MCF 10A (cell line): ENCODE measurements at regions of chr2 and their contacts with region 1.

Region 1: GRCh38 chr2:30072250-30072842 is 74.5 kb upstream of the YPEL5 start:
- DNase-seq: peak; percentile 85
- H3K4me3 Mint-ChIP-seq: no peak overlapping the region
- H3K27ac Mint-ChIP-seq: no peak overlapping the region
- H3K4me1 Mint-ChIP-seq: no peaks in the 10 kb centered on the region
- H3K27me3 Mint-ChIP-seq: peaks cover 65% of the 10 kb centered on the region
- CTCF ChIP-seq: peak; percentile 74

Region 2: GRCh38 chr2:29238497-29238896 is 833.8 kb before region 1 on chr2:
- CTCF ChIA-PET with region 1: no interaction called
- POLR2A ChIA-PET with region 1: no interaction called
- intact Hi-C with region 1: loop called (anchors 5 kb)
- DNase-seq: peak; percentile 64
- H3K4me3 Mint-ChIP-seq: no peak overlapping the region
- H3K27ac Mint-ChIP-seq: no peak overlapping the region
- H3K4me1 Mint-ChIP-seq: no peaks in the 10 kb centered on the region
- H3K27me3 Mint-ChIP-seq: peaks cover 74% of the 10 kb centered on the region
- CTCF ChIP-seq: peak; percentile 76

Region 3: GRCh38 chr2:29295857-29296256 is 776.5 kb before region 1 on chr2:
- CTCF ChIA-PET with region 1: no interaction called
- POLR2A ChIA-PET with region 1: no interaction called
- intact Hi-C with region 1: loop called (anchors 5 kb)
- DNase-seq: peak; percentile 44
- H3K4me3 Mint-ChIP-seq: no peak overlapping the region
- H3K27ac Mint-ChIP-seq: no peak overlapping the region
- H3K4me1 Mint-ChIP-seq: no peaks in the 10 kb centered on the region
- H3K27me3 Mint-ChIP-seq: peaks cover 81% of the 10 kb centered on the region
- CTCF ChIP-seq: peak; percentile 33

Region 4: DNA sequence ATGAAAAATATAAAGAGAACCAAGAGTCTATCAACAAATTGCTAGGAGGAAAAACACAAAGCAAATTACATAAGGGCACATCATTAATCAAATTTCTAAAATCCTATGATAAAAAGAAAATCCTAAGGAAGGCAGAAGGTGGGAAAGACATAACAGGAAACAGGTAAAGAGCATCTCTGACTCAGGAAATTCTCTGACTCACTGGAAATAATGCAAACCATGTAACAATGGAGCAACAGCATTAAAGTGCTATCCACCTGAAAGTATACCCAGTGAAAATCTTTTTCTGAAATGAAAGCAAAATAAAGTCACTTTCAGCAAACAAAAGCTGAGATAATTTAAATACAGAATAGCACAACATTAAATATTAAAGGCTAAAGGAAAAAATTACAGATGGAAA is 161.9 kb before region 1 on chr2:
- CTCF ChIA-PET with region 1: no interaction called
- POLR2A ChIA-PET with region 1: no interaction called
- intact Hi-C with region 1: no loop called
- DNase-seq: no peak
- H3K4me3 Mint-ChIP-seq: no peak overlapping the region
- H3K27ac Mint-ChIP-seq: no peak overlapping the region
- H3K4me1 Mint-ChIP-seq: no peaks in the 10 kb centered on the region
- H3K27me3 Mint-ChIP-seq: no peaks in the 10 kb centered on the region
- CTCF ChIP-seq: no peak

Region 5: GRCh38 chr2:29923110-29923721 is 149.1 kb before region 1 on chr2:
- CTCF ChIA-PET with region 1: interaction called, 45 read pairs
- POLR2A ChIA-PET with region 1: no interaction called
- intact Hi-C with region 1: loop called (anchors 1 kb)
- DNase-seq: peak; percentile 83
- H3K4me3 Mint-ChIP-seq: no peak overlapping the region
- H3K27ac Mint-ChIP-seq: no peak overlapping the region
- H3K4me1 Mint-ChIP-seq: no peaks in the 10 kb centered on the region
- H3K27me3 Mint-ChIP-seq: peaks cover 42% of the 10 kb centered on the region
- CTCF ChIP-seq: peak; percentile 86

Region 6: DNA sequence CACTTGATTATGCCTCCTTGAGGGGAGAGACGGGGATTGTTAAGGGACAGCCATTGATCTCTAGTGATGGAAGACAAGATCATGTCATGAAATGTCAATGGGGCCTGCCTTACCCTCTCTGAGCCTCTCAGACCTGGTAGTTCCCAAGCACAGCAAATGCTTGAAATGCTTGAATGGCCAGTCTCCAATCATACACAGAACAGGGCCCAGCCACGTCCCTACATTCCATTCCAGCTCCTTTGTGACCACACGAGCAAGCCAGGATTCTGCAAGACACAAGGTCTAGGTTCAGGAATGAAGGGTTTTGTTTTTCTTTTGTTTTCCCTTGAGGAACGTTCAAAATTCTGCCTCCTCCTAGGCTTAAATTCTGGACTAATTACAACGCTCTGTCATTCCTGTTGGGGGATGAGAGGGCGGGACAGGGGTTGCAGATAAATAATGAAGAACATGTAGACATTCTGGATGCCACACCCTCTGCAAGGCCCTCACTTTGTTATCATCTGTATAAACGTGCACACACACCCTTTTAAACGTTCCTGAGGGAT is 23.6 kb before region 1 on chr2:
- CTCF ChIA-PET with region 1: interaction called, 17 read pairs
- POLR2A ChIA-PET with region 1: no interaction called
- intact Hi-C with region 1: no loop called
- DNase-seq: no peak
- H3K4me3 Mint-ChIP-seq: no peak overlapping the region
- H3K27ac Mint-ChIP-seq: peak overlapping the region; percentile 36
- H3K4me1 Mint-ChIP-seq: no peaks in the 10 kb centered on the region
- H3K27me3 Mint-ChIP-seq: peaks cover 97% of the 10 kb centered on the region
- CTCF ChIP-seq: no peak